Astrocyte of the cerebellum (primary cell): ENCODE measurements at regions of chr5 and their contacts with region 1.

Region 1: DNA sequence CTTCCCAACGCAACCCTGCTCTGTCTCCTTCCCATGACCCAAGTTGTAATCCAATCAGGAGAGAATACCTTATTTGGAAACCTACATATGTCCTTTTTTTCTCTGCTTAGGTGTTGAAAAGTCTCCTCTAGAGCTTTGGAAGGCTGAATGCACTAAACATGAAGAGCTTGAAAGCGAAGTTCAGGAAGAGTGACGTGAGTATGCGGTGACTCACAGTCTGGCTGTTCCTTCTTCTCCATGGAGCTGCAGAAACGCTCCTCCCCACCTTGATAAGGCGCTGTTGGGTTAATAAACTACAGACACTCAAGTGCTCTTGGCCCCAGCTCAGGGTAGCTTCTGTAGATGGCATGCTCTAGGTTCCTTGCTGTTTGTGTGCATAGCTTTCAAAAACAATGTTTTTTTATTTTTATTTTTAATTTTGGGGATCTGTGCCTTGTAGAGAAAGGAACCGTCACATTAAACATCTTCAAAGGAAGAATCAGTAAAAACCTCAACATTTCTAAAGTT is 30.7 kb downstream of the RAI14 start:
- DNase-seq: peak; percentile 95
- H3K4me3 ChIP-seq: no peak overlapping the region
- CTCF ChIP-seq: no peak

Region 2: DNA sequence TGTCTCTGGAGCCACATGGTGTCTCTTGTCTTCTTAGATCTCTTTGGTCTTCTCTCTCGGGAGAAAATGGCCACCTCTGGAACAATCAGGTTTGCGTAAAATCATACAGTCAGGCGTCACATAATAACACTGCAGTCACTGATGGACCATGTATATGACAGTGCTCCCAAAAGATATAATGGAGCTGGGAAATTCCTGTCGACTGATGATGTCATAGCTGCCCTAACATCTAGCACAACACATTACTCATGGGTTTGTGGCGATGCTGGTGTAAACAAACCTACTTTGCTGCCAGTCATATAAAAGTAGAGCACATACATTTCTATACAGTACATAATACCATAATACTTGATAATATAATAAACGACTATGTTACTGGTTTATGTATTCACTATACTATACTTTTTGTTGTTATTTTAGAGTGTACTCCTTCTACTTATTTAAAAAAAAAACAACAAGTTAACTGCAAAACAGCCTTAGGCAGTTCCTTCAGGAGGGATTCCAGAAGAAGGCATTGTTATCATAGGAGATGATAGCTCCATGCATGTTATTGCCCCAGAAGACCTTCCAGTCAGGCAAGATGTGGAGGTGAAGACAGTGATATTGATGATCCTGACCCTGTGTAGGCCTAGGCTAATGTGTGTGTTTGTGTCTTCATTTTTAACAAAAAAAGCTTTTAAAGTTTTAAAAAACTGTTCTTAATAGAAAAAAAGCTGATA is 60.6 kb before region 1 on chr5:
- in situ Hi-C with region 1: no loop called
- DNase-seq: peak; percentile 48
- H3K4me3 ChIP-seq: no peak overlapping the region
- CTCF ChIP-seq: no peak

Region 3: DNA sequence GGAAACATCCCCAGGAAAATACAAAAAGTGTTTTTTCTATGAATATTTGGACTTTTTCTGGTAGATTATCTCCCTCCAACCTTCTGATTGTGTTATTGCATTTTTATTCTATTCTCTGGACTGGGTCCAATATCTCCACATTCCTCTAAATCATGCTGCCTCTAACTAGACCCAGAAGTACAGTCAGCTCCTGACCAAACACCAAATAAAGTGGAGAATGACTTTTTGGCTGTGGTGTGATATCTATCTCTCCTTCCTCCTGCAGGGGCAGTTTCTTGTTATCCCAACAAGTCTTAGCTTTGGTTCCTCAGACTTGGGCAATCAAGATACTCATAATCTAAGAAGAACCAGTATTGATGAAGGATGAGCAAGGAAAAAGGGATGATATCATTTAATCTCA is 33.9 kb before region 1 on chr5:
- in situ Hi-C with region 1: loop called (anchors 5 kb)
- DNase-seq: peak; percentile 72
- H3K4me3 ChIP-seq: no peak overlapping the region
- CTCF ChIP-seq: peak; percentile 14

Region 4: DNA sequence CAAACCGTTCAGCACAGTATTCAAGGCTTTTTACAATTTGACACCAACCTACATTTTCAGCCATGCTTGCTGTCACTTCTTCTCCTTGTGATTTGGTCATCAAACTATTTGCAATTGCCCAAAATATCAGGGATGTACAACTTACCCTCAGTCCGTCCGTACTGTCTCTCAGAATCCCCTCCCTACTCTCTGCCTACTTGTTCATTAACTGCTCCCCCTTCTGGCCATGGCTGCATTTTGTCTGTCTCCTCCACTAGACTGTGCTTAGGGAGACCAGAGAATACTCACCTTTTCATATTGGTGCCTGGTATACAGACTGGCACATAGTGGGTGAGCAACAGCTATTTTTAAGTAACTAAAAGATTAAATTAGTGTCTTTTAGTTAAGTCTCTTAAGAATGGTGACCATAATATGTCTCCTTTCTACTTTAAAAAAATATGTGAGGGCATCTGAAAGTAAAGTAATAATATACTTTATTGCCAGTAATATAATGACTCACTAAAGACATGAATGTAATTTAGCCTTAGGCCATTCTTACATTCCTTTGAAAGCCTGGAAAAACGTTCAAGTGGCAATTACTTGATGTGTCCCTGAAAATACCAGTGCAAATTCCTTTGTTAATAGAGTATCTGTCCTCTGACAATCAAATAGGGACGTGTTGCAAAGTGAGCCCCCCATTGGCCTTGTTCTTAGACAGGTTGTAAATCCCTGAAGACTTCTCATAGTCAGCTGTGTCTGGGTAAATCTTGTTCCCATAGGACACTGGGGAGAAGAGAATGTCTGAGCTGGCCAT is 515.7 kb after region 1 on chr5:
- in situ Hi-C with region 1: no loop called
- DNase-seq: peak; percentile 19
- H3K4me3 ChIP-seq: no peak overlapping the region
- CTCF ChIP-seq: peak; percentile 67